Panc1 (cell line): ENCODE measurements at regions of chr7 and their contacts with region 1.

Region 1: GRCh38 chr7:119606297-119606696 is 666.7 kb upstream of the KCND2 start:
- DNase-seq: no peak
- ATAC-seq: no peak
- H3K4me3 ChIP-seq: no peak overlapping the region
- H3K27ac ChIP-seq: no peak overlapping the region
- H3K4me1 ChIP-seq: no peaks in the 10 kb centered on the region
- H3K27me3 ChIP-seq: no peaks in the 10 kb centered on the region
- CTCF ChIP-seq: no peak

Region 2: GRCh38 chr7:119397156-119397555 is 209.1 kb before region 1 on chr7:
- CTCF ChIA-PET with region 1: no interaction called
- POLR2A ChIA-PET with region 1: no interaction called
- in situ Hi-C with region 1: no loop called
- intact Hi-C with region 1: no loop called
- DNase-seq: no peak
- ATAC-seq: no peak
- H3K4me3 ChIP-seq: no peak overlapping the region
- H3K27ac ChIP-seq: no peak overlapping the region
- H3K4me1 ChIP-seq: no peaks in the 10 kb centered on the region
- H3K27me3 ChIP-seq: no peaks in the 10 kb centered on the region
- CTCF ChIP-seq: no peak

Region 3: GRCh38 chr7:119681336-119681735 is 75.0 kb after region 1 on chr7:
- CTCF ChIA-PET with region 1: no interaction called
- POLR2A ChIA-PET with region 1: no interaction called
- in situ Hi-C with region 1: no loop called
- intact Hi-C with region 1: loop called (anchors 2 kb)
- DNase-seq: no peak
- ATAC-seq: no peak
- H3K4me3 ChIP-seq: no peak overlapping the region
- H3K27ac ChIP-seq: no peak overlapping the region
- H3K4me1 ChIP-seq: no peaks in the 10 kb centered on the region
- H3K27me3 ChIP-seq: no peaks in the 10 kb centered on the region
- CTCF ChIP-seq: no peak